PC-9 (cell line): ENCODE measurements at regions of chr15 and their contacts with region 1.

Region 1: GRCh38 chr15:69278371-69278770 is 20.3 kb upstream of the PAQR5 start:
- DNase-seq: no peak
- H3K4me3 ChIP-seq: no peak overlapping the region
- H3K27ac ChIP-seq: no peak overlapping the region
- H3K4me1 ChIP-seq: no peaks in the 10 kb centered on the region
- H3K27me3 ChIP-seq: no peaks in the 10 kb centered on the region
- CTCF ChIP-seq: no peak

Region 2: GRCh38 chr15:68962465-68962864 is 315.9 kb before region 1 on chr15:
- CTCF ChIA-PET with region 1: no interaction called
- POLR2A ChIA-PET with region 1: no interaction called
- intact Hi-C with region 1: no loop called
- DNase-seq: no peak
- H3K4me3 ChIP-seq: no peak overlapping the region
- H3K27ac ChIP-seq: no peak overlapping the region
- H3K4me1 ChIP-seq: no peaks in the 10 kb centered on the region
- H3K27me3 ChIP-seq: no peaks in the 10 kb centered on the region
- CTCF ChIP-seq: no peak

Region 3: GRCh38 chr15:69298697-69299441 is 20.5 kb after region 1 on chr15 and contains the start of gene PAQR5:
- CTCF ChIA-PET with region 1: interaction called, 16 read pairs
- POLR2A ChIA-PET with region 1: no interaction called
- intact Hi-C with region 1: no loop called
- DNase-seq: peak in 1 of 2 experiments; percentile 54
- H3K4me3 ChIP-seq: peak within 1 kb of the TSS; percentile 58; the same call in 1 of the 2 replicates
- H3K27ac ChIP-seq: no peak within 1 kb of the TSS
- H3K4me1 ChIP-seq: peaks cover 8% of the 10 kb centered on the region
- H3K27me3 ChIP-seq: 0 out of 2 replicates have a peak, but pooled peaks cover 5% of the 10 kb centered on the region
- CTCF ChIP-seq: no peak
- total RNA-seq, gene PAQR5: 4.9 and 5.1 TPM in 2 replicates